ENCODE measurements at regions of chr9 and their contacts with region 1.

Region 1: DNA sequence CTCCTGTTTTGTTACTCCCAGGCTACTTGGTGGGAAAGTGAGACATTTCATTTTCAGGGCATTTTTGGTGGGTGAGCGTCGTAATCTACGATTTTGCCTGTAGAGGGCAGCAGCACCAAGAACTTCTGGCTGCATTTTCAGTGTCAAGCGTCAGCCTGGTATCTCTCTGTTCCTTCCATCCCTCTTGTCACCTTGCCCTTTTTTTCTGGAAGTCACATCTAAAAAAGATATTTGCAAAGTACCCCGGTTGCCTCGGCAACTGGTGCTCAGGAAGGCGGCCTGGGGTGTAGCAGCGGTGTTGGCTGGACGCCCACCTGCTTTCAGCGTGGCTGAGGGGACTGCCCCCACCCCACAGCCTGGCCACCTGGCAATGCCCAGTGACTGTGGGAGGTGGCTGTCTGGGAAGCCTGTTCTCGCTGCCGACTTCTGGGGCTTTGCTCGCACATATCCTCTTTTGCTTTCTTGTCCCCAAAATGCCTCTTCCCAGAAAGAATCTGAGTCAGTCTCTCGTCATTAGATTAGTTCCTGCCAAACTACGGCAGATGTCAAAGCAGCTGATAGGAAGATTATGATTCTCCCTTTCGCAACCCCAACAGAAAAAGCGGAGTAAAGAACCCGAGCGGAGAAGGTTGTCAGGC is 84.5 kb downstream of the ACER2 start:
- DNase-seq: no peak
- H3K4me3 ChIP-seq: peak overlapping the region; percentile 46
- CTCF ChIP-seq: peak; percentile 70

Region 2: GRCh38 chr9:18994263-18995095 is 498.8 kb before region 1 on chr9:
- CTCF ChIA-PET with region 1: no interaction called
- POLR2A ChIA-PET with region 1: no interaction called
- DNase-seq: no peak
- H3K4me3 ChIP-seq: no peak overlapping the region
- CTCF ChIP-seq: no peak

Region 3: GRCh38 chr9:19471737-19472648 is 21.3 kb before region 1 on chr9:
- CTCF ChIA-PET with region 1: interaction called, 10 read pairs
- POLR2A ChIA-PET with region 1: no interaction called
- DNase-seq: no peak
- H3K4me3 ChIP-seq: no peak overlapping the region
- CTCF ChIP-seq: peak; percentile 70

Region 4: GRCh38 chr9:19481971-19482404 is 11.3 kb before region 1 on chr9:
- CTCF ChIA-PET with region 1: interaction called, 14 read pairs
- POLR2A ChIA-PET with region 1: no interaction called
- DNase-seq: no peak
- H3K4me3 ChIP-seq: no peak overlapping the region
- CTCF ChIP-seq: no peak

Region 5: GRCh38 chr9:19577411-19577810 is 84.1 kb after region 1 on chr9:
- CTCF ChIA-PET with region 1: no interaction called
- POLR2A ChIA-PET with region 1: no interaction called
- DNase-seq: no peak
- H3K4me3 ChIP-seq: no peak overlapping the region
- CTCF ChIP-seq: no peak